Mucosa of descending colon (tissue), 3 donors: ENCODE measurements at regions of chr1 and their contacts with region 1.

Region 1: DNA sequence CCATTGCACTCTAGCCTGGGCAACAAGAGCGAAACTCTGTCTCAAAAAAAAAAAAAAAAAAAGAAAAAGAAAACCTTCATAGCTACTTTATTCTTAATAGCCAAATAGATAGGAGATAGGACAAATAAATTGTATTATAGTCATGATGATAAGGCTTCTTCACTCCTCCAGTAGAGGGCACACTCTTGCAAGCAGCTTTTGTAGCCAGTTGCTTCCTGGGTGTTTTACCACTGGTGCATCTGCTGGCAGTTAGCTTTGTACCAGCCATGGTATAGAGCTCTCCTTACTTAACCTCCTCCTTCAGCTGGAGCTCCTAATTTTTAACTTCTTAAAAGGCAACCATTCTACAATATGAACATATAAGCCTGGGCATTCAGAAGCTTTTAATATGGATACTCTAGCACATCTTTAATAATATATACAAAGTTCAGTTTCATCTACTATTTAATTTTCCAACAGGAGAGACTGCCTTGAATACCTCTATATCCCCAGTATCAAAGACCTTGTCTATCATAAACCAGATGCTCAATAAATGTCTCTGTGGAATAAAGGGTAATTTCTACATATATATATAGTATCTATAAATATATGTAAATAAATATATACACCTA is 35.8 kb downstream of the EVI5 start:
- DNase-seq: peak in 1 of 3 donors; percentile 71
- ATAC-seq: peak; percentile 96
- H3K4me3 ChIP-seq: no peak overlapping the region
- H3K4me1 ChIP-seq: no peaks in the 10 kb centered on the region
- CTCF ChIP-seq: peak; percentile 60

Region 2: DNA sequence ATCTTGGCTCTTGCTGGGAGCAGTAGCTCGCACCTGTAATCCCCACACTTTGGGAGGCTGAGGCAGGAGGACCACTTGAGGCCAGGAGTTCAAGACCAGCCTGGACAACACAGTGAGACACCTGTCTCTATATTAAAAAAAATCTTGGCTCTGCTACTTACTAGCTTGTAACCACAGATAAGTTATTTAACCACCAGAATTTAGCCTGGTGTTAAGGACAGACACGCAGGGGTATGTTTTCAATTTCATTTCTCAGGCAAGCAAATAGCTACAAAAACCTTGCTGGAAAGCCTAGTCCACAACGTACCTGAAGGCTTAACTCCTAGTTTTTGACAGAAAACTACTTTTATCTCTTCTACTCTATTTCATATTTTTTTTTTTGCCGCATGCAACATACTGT is 237.6 kb before region 1 on chr1:
- intact Hi-C with region 1: no loop called
- DNase-seq: no peak
- ATAC-seq: no peak
- H3K4me3 ChIP-seq: no peak overlapping the region
- H3K4me1 ChIP-seq: no peaks in the 10 kb centered on the region
- CTCF ChIP-seq: no peak

Region 3: GRCh38 chr1:92623187-92623778 is 125.8 kb before region 1 on chr1:
- intact Hi-C with region 1: no loop called
- DNase-seq: no peak
- ATAC-seq: no peak
- H3K4me3 ChIP-seq: no peak overlapping the region
- H3K4me1 ChIP-seq: no peaks in the 10 kb centered on the region
- CTCF ChIP-seq: no peak

Region 4: GRCh38 chr1:92817986-92818764 is 69.0 kb after region 1 on chr1:
- intact Hi-C with region 1: loop called in 1 of 2 experiments (anchors 10 kb)
- DNase-seq: peak in 1 of 3 donors; percentile 48
- ATAC-seq: peak; percentile 64
- H3K4me3 ChIP-seq: no peak overlapping the region
- H3K4me1 ChIP-seq: peaks cover 10% of the 10 kb centered on the region
- CTCF ChIP-seq: peak; percentile 54

Region 5: DNA sequence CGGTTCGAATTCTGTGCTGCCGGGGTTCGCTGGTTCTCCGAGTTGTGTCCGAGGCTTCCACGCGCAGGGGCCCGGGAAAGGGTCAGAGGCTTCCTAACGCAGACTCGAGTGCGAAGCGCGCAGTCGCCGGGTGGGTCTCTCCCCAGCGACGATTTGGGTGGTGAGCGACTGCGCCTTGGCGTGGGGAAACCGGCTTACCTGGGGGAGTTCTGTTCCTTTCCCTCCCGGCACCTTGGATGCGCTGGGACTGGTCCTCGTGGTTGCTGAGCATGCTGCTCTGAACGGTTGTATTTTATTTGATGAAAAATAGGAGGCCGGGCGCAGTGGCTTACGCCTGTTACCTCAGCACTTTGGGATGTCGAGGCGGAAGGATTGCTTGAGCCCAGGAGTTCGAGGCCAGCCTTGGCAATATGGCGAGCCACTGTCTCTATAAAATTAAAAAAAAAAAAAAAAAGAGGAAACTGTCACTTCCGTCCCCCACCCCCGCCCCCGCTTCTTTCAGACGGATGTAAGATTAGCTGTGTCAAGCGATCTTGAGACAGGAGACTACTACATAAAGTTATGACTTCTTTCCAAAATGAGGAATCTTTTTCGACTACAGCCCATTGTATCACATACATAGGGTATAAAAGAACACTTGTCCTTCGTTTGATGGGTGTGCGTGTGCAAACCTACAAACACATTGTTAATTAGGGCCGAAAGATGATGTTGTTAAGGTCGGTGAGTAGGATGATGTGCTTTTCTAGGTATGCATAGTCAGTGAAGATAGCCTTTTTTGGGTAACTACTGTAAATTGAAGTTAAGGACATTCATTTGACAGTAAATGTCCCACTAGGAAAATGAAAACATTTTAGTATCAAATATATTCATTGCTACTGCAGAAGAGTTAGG is 431.8 kb after region 1 on chr1 and contains the start of gene CCDC18:
- intact Hi-C with region 1: no loop called
- DNase-seq: no peak
- ATAC-seq: peak; percentile 1
- H3K4me3 ChIP-seq: peak within 1 kb of the TSS; percentile 65
- H3K4me1 ChIP-seq: peaks cover 6% of the 10 kb centered on the region
- CTCF ChIP-seq: no peak
- total RNA-seq, gene CCDC18: 2.7 to 7.7 (median 3.2) TPM